Activated CD4-positive, alpha-beta memory T cell treated with anti-CD3 and anti-CD28 coated beads, Interleukin-2, amount 10 ng/mL, durations not matched to agents 7 days and 5 days (primary cell): ENCODE measurements at regions of chr10 and their contacts with region 1.

Region 1: GRCh38 chr10:84328418-84329195 is at the start of gene CCSER2:
- DNase-seq: peak; percentile 94
- H3K4me3 Mint-ChIP-seq: peak within 1 kb of the TSS; percentile 86
- H3K27ac Mint-ChIP-seq: peak within 1 kb of the TSS; percentile 94
- H3K4me1 Mint-ChIP-seq: peaks cover 34% of the 10 kb centered on the region
- H3K27me3 Mint-ChIP-seq: peaks cover 10% of the 10 kb centered on the region
- total RNA-seq, gene CCSER2: 80.2 to 87.9 TPM

Region 2: DNA sequence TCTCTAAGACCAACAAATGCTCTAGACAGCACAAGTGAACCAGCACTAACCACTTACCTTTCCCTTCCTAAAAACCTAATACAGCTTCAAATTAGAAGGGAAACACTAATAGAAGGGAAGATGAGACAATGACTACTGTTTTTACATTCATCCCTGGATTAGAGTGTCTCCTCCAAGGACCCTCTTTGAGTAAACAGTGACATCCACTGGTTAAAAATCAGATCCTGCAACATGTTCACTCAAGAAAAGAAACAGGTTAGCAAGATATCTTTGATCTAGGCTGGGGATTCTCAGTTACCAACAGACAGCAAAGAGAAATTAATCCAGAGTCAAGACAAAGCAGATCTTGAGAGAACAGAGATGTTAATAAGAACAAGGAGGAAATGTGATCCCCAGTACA is 367.0 kb before region 1 on chr10:
- CTCF ChIA-PET with region 1: no interaction called
- POLR2A ChIA-PET with region 1: no interaction called
- DNase-seq: no peak
- H3K4me3 Mint-ChIP-seq: no peak overlapping the region
- H3K27ac Mint-ChIP-seq: no peak overlapping the region
- H3K4me1 Mint-ChIP-seq: no peaks in the 10 kb centered on the region
- H3K27me3 Mint-ChIP-seq: peaks cover 2% of the 10 kb centered on the region

Region 3: GRCh38 chr10:84139126-84140035 is 189.2 kb before region 1 on chr10 and contains the start of gene GHITM:
- CTCF ChIA-PET with region 1: no interaction called
- POLR2A ChIA-PET with region 1: interaction called, 18 read pairs
- DNase-seq: peak; percentile 100
- H3K4me3 Mint-ChIP-seq: peak within 1 kb of the TSS; percentile 85
- H3K27ac Mint-ChIP-seq: peak within 1 kb of the TSS; percentile 94
- H3K4me1 Mint-ChIP-seq: peaks cover 27% of the 10 kb centered on the region
- H3K27me3 Mint-ChIP-seq: no peaks in the 10 kb centered on the region
- total RNA-seq, gene GHITM: 120 to 124 TPM

Region 4: DNA sequence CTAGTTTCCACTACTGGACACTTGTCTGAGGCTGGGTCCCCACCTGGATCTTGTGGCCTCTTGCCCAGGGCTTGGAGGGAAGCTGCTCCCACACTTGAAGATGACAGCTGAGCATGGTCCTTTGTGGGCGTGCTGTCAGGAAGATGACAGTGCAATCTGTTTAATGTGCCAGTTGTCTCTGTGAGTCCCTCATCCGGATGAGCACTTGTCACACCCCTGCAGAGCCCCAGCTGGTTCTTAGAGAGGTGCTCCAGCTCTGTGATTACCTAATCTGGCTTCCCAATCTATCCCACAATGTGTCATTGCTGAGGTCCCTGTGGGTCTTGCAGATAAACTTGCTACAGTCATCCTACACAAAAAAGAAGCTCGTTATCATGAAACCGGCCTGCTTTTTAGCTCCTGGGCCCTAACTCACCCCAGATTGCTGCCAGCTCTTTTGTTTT is 35.0 kb before region 1 on chr10:
- CTCF ChIA-PET with region 1: interaction called, 10 read pairs
- POLR2A ChIA-PET with region 1: interaction called, 12 read pairs
- DNase-seq: peak; percentile 54
- H3K4me3 Mint-ChIP-seq: no peak overlapping the region
- H3K27ac Mint-ChIP-seq: peak overlapping the region; percentile 45
- H3K4me1 Mint-ChIP-seq: peaks cover 25% of the 10 kb centered on the region
- H3K27me3 Mint-ChIP-seq: peaks cover 25% of the 10 kb centered on the region

Region 5: GRCh38 chr10:84308481-84309304 is 19.9 kb before region 1 on chr10:
- CTCF ChIA-PET with region 1: interaction called, 10 read pairs
- POLR2A ChIA-PET with region 1: interaction called, 30 read pairs
- DNase-seq: peak; percentile 41
- H3K4me3 Mint-ChIP-seq: peak overlapping the region; percentile 12
- H3K27ac Mint-ChIP-seq: peak overlapping the region; percentile 55
- H3K4me1 Mint-ChIP-seq: peaks cover 37% of the 10 kb centered on the region
- H3K27me3 Mint-ChIP-seq: peaks cover 25% of the 10 kb centered on the region